Esophagus squamous epithelium (tissue), 5 donors: ENCODE measurements at regions of chr6 and their contacts with region 1.

Region 1: DNA sequence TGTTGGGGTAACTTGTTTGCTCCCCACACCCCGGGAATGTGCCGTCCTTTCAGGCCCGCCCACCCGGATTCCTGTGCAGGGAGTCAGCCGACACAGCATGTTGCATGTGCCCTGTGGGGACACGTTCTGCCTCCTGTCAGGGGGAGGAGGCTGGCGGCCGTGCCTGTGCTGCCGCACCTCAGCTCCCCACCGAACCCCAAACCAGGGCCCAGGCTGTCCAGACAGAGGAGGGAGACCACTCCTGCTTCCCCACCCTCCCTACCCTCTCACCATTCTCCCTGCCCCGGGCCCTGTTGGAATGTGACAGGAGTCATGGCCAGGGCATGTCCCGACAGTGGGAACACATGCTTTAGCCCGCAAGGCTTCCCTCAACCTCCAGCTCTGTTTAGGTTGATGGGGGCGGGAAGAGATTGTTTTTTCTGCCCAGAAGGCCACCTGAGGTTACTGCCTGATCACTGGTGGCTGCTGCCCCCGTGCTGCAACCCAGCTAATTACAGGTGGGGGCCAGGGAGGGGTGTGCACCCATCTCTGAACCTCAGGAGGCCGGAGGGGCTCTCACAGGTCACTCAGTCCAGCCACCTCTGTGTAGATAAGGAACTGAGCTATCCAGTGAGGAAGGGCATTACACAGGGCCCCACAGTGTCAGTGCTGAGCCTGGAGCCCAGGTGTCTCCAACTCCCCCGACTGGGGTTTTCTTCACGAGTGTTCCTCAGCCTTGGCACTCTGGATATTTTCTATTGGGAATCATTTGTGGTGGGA is 13.6 kb downstream of the LRRC73 start:
- DNase-seq: no peak
- H3K4me3 ChIP-seq: no peak overlapping the region
- H3K27ac ChIP-seq: peak overlapping the region; percentile 47 to 75 (median 64)
- H3K4me1 ChIP-seq: peaks cover 18 to 52% (median 23%) of the 10 kb centered on the region in 3 donors
- H3K27me3 ChIP-seq: peaks cover 0 to 33% (median 0%) of the 10 kb centered on the region in 4 donors
- CTCF ChIP-seq: peak in 5 of 6 experiments; percentile 45 to 72 (median 68)
- POLR2A ChIP-seq: peak in 1 of 4 donors; percentile 13

Region 2: DNA sequence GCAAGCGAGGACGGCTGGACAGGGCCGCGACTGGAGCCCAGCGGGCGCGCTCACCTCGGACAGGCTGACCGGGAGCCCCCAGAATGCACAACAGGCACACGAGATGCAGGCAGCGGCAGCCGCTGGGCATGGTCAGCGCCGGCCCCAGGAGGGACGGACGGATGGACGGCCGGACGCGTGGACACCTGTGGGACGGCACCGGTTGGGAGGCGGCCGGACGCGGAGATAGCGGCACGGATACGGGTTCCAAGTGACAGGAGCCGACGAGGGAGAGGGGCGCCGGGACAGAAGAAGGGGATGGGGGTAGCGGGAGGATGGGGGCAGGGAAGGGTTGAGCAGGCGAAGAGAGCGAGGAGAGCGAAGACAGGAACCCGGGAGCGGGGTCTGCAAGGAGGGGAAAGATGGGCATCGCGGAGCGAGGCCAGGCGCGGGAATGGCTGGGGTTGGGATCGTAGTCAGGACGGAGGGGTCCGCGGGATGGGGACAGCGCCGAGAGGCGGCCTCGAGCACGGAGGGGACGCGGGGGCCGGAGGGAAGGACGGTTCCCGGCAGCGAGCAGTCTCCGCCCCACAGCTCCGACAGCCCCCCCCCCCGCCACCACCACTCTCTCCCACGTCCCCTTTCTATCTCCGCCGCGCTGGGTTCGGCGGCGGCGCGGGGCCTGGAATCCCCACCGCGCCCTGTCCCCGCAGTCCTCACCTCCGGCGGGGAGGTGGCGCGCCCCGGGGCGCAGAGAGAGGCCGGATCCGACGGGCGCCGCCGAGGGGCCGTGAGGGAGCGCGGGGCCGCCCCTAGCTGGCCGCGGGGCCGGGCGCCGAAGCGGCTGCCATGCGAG is 41.6 kb before region 1 on chr6:
- intact Hi-C with region 1: loop called (anchors 5 kb)
- DNase-seq: no peak
- H3K4me3 ChIP-seq: peak overlapping the region; percentile 38 to 67 (median 58)
- H3K27ac ChIP-seq: peak overlapping the region; percentile 59 to 79 (median 70)
- H3K4me1 ChIP-seq: peaks cover 6 to 49% (median 9%) of the 10 kb centered on the region in 3 donors
- H3K27me3 ChIP-seq: peaks cover 0 to 55% (median 4%) of the 10 kb centered on the region in 4 donors
- CTCF ChIP-seq: no peak
- POLR2A ChIP-seq: no peak

Region 3: DNA sequence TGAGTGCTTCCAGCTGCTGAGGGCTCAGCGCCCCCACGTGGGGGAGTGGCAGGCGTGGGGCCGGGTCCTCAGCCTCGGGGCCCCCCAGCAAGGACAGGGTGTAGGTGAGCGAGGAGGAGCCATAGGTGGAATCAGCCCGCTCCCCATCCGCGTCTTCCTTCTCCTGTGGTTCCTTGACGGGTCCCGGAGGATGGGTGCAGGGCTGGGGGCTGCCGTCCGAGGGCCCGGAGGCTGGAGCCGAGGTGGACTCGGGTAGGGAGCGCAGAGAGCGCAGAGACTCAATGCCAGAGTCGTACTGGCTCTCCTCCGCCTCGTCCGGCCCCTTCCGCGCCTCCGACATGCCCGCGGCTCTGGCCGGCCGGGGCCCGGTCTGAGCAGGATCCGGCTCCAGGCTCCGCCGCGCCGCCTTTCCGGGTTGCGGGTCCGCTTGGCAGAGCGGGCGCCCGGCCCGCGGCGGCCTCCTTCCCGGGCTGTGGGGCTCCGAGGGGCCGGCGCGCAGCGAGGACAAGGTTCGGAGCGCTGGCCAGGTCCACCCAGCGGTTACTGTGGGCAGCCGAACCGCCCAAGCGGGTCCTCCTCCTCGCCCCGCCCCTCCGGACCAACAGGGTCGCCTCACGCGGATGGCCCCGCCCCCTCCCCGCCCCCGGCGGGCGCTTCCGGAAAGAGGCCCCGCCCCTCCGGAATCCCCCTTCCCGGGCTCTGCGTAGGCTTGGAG is 768.6 kb after region 1 on chr6 and contains the start of gene NFKBIE:
- intact Hi-C with region 1: no loop called
- DNase-seq: no peak
- H3K4me3 ChIP-seq: peak within 1 kb of the TSS; percentile 67 to 96 (median 82)
- H3K27ac ChIP-seq: peak within 1 kb of the TSS; percentile 77 to 92 (median 84)
- H3K4me1 ChIP-seq: peaks cover 26 to 44% (median 26%) of the 10 kb centered on the region in 3 donors
- H3K27me3 ChIP-seq: peaks cover 0 to 22% (median 4%) of the 10 kb centered on the region in 4 donors
- CTCF ChIP-seq: peak in 2 of 6 experiments; percentile 4
- POLR2A ChIP-seq: peak in 2 of 4 donors; percentile 41 to 83
- total RNA-seq, gene NFKBIE: 8.6 to 11.2 (median 10.2) TPM